ENCODE measurements at regions of chr17 and their contacts with region 1.

Region 1: DNA sequence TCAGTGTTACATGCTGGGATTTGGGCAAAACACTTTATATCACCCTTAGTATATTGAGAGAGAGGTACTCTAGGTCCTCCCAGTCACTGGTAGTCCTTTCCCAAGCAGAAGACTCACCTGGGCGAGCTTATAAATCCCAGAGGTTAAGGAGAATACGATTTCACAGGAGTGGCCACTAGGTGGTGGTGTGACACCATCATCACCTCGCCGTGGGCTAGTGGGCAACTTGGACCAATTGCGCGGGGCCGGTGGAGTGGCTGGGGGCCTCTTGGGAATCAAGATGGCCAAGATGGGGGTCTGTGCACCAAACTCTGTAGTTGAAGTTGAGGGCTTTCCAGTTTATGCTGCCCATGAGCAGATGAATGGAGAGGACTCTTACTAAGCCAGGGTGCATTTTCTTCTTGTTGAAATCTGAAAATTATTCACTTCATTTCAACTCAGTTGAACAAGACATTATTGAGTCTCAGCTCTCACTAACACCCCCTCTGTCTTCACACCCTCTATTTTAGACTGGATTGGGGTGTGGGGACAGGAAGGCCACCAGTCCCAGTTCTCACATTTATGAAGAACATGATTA is 38.2 kb upstream of the PIRT start:
- DNase-seq: no peak
- H3K4me3 ChIP-seq: no peak overlapping the region
- H3K27ac ChIP-seq: no peak overlapping the region
- H3K4me1 ChIP-seq: no peaks in the 10 kb centered on the region
- H3K27me3 ChIP-seq: peaks cover 0 to 32% (median 0%) of the 10 kb centered on the region in 7 donors
- CTCF ChIP-seq: peak in 9 of 11 experiments; percentile 14 to 65 (median 54)
- POLR2A ChIP-seq: no peak

Region 2: DNA sequence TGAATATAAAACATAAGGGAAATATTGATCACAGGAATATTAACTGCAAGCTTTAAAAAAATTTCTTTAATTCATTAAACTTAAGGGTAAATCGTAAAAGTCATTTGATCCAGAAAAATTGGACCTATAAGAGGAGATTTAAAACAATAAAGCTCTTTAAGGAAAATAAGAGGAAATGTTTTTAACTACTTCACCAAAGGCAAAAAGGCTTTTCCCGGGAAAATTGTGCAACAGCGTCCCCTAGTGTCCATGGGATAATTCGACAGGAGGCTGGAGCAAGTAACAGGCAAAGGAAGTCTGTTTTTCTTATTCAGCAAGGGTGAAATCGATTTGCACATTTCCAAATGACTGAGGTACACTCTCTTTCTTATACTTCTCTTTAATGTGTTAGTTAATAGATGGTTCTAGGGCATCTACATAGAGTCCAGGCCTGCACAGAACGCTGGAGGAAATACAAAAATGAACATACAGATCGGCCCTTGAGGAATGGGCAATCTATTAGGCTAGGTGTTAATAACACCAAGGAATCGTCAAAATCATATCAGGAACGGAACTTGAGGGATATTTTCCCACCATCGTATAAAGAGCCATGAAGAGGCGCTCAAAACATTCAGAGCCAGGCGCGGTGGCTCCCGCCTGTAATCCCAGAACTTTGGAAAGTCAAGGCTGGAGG is 1059.8 kb after region 1 on chr17:
- intact Hi-C with region 1: loop called (anchors 5 kb)
- DNase-seq: no peak
- H3K4me3 ChIP-seq: no peak overlapping the region
- H3K27ac ChIP-seq: no peak overlapping the region
- H3K4me1 ChIP-seq: no peaks in the 10 kb centered on the region
- H3K27me3 ChIP-seq: peaks cover 0 to 10% (median 0%) of the 10 kb centered on the region in 7 donors
- CTCF ChIP-seq: peak in 10 of 11 experiments; percentile 35 to 84 (median 66)
- POLR2A ChIP-seq: no peak

Region 3: GRCh38 chr17:11980813-11981212 is 1104.7 kb after region 1 on chr17:
- intact Hi-C with region 1: loop called (anchors 5 kb)
- DNase-seq: no peak
- H3K4me3 ChIP-seq: no peak overlapping the region
- H3K27ac ChIP-seq: no peak overlapping the region
- H3K4me1 ChIP-seq: no peaks in the 10 kb centered on the region
- H3K27me3 ChIP-seq: no peaks in the 10 kb centered on the region
- CTCF ChIP-seq: no peak
- POLR2A ChIP-seq: no peak

Measured in spleen (tissue), 13 donors.